ENCODE measurements at regions of chr1 and their contacts with region 1.

Region 1: GRCh38 chr1:40709100-40709801 is 17.7 kb downstream of the NFYC start:
- DNase-seq: peak in 4 of 5 donors; percentile 87 to 90 (median 88)
- ATAC-seq: peak; percentile 93 to 96 (median 94)
- H3K4me3 ChIP-seq: peak overlapping the region; percentile 42 to 73 (median 62)
- H3K27ac ChIP-seq: peak overlapping the region; percentile 75 to 91 (median 86)
- H3K4me1 ChIP-seq: peaks cover 11 to 74% (median 51%) of the 10 kb centered on the region in 12 donors
- H3K27me3 ChIP-seq: no peaks in the 10 kb centered on the region
- CTCF ChIP-seq: no peak
- POLR2A ChIP-seq: peak; percentile 53 to 78

Region 2: GRCh38 chr1:40691538-40692428 is 17.5 kb before region 1 on chr1 and contains the start of gene NFYC:
- intact Hi-C with region 1: loop called in 2 of 10 experiments (anchors 1 to 2 kb)
- DNase-seq: peak; percentile 98 to 99 (median 98)
- ATAC-seq: peak; percentile 96 to 97 (median 96)
- H3K4me3 ChIP-seq: peak within 1 kb of the TSS; percentile 58 to 98 (median 90)
- H3K27ac ChIP-seq: peak within 1 kb of the TSS; percentile 90 to 100 (median 100)
- H3K4me1 ChIP-seq: peaks cover 0 to 51% (median 31%) of the 10 kb centered on the region in 12 donors
- H3K27me3 ChIP-seq: no peaks in the 10 kb centered on the region
- CTCF ChIP-seq: no peak
- POLR2A ChIP-seq: peak in 1 of 2 donors; percentile 88
- total RNA-seq, gene NFYC: 52.6 to 82.8 (median 69.4) TPM

Region 3: GRCh38 chr1:40802078-40802741 is 93.0 kb after region 1 on chr1:
- intact Hi-C with region 1: loop called in 1 of 10 experiments (anchors 5 kb)
- DNase-seq: peak; percentile 88 to 92 (median 90)
- ATAC-seq: peak; percentile 59 to 91 (median 88)
- H3K4me3 ChIP-seq: peak overlapping the region in 11 of 12 donors; percentile 9 to 59 (median 44)
- H3K27ac ChIP-seq: peak overlapping the region in 11 of 12 donors; percentile 27 to 94 (median 72)
- H3K4me1 ChIP-seq: peaks cover 6 to 53% (median 37%) of the 10 kb centered on the region in 12 donors
- H3K27me3 ChIP-seq: no peaks in the 10 kb centered on the region
- CTCF ChIP-seq: peak in 1 of 12 donors; percentile 5
- POLR2A ChIP-seq: no peak